ENCODE measurements at regions of chrX and their contacts with region 1.

Region 1: GRCh38 chrX:42128020-42128419 is 204.7 kb upstream of the CASK start:
- DNase-seq: no peak
- ATAC-seq: peak; percentile 84
- H3K4me3 ChIP-seq: no peak overlapping the region
- H3K27ac ChIP-seq: no peak overlapping the region
- H3K4me1 ChIP-seq: no peaks in the 10 kb centered on the region
- H3K27me3 ChIP-seq: no peaks in the 10 kb centered on the region
- CTCF ChIP-seq: no peak
- EP300 ChIP-seq: no peak
- POLR2A ChIP-seq: no peak
- RAD21 ChIP-seq: no peak

Region 2: DNA sequence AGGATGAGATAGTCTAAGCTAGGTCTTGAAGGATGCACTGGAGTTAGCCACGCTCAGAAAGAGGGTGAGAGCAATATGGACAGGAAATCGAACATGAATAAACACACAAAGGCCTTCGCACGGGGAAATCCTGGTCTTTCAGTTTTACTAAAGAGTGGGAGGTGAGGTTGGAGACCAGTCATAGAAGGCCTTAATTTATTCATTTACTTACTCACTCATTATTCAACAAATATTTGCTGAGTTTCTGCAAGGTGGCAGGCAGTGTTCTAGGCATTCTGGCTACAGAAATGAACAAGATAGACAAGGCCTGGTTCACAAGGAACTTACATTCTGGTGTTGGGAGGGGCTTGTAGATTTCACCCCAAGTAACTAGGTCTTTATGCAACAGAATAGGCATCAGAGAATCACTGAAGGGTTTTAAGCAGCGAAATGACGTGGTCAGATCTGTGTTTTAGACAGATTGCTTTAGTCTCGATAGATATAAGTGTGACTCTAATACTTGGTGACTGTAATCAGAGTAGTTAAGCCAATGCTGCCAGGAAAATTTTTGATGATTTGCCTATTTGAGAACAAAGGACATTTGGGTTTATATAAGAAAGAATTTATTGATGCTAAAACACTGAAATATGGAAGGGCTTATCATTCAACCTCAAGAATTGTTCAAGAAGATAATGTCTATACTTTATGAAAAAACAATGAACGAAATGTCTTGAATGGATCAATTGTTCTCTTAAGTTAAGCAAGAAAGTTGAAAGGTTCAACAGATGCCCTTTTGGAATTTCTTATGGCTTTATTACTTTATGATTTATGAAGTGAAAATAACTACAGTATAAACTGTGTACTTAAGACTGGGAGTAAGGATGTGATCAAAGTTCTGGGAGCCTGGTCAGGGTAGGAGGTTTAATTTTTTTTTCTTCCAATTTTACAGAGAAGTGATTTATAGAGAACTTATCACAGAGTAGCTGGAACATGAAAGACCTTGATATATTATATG is 20.2 kb before region 1 on chrX:
- CTCF ChIA-PET with region 1: no interaction called
- POLR2A ChIA-PET with region 1: no interaction called
- RAD21 ChIA-PET with region 1: interaction called, 17 read pairs
- SMC1A ChIA-PET with region 1: interaction called, 12 read pairs
- in situ Hi-C with region 1: no loop called
- intact Hi-C with region 1: no loop called
- DNase-seq: no peak
- ATAC-seq: peak; percentile 89
- H3K4me3 ChIP-seq: no peak overlapping the region
- H3K27ac ChIP-seq: no peak overlapping the region
- H3K4me1 ChIP-seq: no peaks in the 10 kb centered on the region; the same call in 1 of the 2 replicates
- H3K27me3 ChIP-seq: no peaks in the 10 kb centered on the region
- CTCF ChIP-seq: no peak
- EP300 ChIP-seq: 0 out of 4 replicates have a peak, but pooled peaks of 1 of the 2 experiments have one; percentile 26
- POLR2A ChIP-seq: no peak
- RAD21 ChIP-seq: no peak